Common myeloid progenitor, CD34-positive (primary cell): ENCODE measurements at regions of chr7 and their contacts with region 1.

Region 1: DNA sequence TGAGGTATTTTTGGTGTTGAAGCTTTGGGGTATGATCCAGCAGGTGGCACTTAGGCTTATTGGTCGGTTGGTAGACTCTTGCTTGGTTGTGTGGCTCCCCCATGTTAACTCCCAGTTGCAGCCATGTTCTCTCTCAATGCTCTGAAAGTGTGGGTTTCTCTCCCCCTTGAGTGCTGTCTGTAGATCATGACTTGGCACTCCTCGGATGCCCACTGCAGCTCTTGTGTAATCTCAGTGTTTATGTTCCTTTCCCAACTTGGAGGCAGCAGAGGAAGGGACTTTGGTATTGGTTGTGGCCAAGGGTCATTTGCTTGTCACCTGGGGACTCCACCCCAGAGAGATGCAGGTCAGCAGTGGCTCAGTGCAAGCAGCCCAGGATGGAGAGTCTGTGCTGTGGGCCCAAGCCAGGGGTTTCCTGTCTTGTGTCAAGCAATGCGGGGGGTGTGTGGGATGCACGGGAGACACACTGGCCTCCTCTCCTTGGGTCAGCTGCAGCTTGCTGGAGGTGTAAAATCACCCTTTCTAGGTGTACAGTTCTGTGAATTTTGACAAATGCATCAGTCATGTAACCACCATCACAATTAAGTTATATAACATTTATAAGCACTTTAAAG is 36.9 kb downstream of the PIK3CG start:
- DNase-seq: peak; percentile 28 to 70 (median 62)
- H3K4me3 ChIP-seq: peak overlapping the region in 1 of 7 experiments; percentile 7
- H3K27ac ChIP-seq: no peak overlapping the region
- H3K4me1 ChIP-seq: peaks cover 0 to 11% (median 8%) of the 10 kb centered on the region in 4 experiments
- H3K27me3 ChIP-seq: no peaks in the 10 kb centered on the region

Region 2: DNA sequence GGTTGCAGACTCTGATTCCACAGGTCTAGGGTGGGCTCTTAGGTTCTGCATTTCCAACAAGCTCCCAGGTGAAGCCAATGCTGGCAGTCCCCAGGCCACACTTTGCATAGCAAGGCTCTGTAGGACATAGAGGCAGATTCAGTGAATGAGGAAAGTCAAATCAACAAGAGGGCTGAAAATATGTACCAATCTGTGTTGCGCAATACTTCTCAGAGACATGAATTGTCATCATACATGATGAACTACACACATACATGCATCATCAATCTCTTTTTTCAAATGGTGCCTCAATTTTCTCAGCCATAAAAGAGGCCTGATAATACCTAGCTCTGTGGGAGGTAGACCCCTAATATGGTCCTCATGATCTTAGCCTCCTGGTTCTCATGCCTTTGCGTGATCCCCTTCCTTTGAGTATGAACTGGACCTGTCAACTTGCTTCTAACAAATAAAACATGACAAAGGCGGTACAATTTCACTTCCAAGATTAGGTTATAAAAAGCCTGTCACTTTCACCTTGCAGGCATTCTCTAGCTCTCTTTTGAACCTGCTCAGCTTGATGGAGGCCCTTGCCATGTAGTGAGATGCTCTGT is 12.2 kb after region 1 on chr7:
- CTCF ChIA-PET with region 1: interaction called, 14 read pairs
- POLR2A ChIA-PET with region 1: no interaction called
- DNase-seq: no peak
- H3K4me3 ChIP-seq: no peak overlapping the region
- H3K27ac ChIP-seq: no peak overlapping the region
- H3K4me1 ChIP-seq: no peaks in the 10 kb centered on the region
- H3K27me3 ChIP-seq: no peaks in the 10 kb centered on the region